Activated T-helper 1 cell treated with anti-CD3 and anti-CD28 coated beads, Interleukin-12 subunit alpha, Interleukin-12 subunit beta, Interleukin-2, Interleukin-4 antibody, amounts not matched to agents 30 ng/mL and 10 ng/mL and 1 ng/mL, durations not matched to agents 14 hours and 24 hours and 36 hours (primary cell): ENCODE measurements at regions of chr12 and their contacts with region 1.

Region 1: GRCh38 chr12:95217377-95218149 is at the starts of genes FGD6 and VEZT:
- DNase-seq: peak; percentile 98
- H3K4me3 Mint-ChIP-seq: peak within 1 kb of the TSS; percentile 97
- H3K27ac Mint-ChIP-seq: peak within 1 kb of the TSS; percentile 98
- H3K4me1 Mint-ChIP-seq: peaks cover 37% of the 10 kb centered on the region
- H3K27me3 Mint-ChIP-seq: peaks cover 9% of the 10 kb centered on the region
- total RNA-seq, gene FGD6: 0.64 and 0.86 TPM in 2 replicates
- total RNA-seq, gene VEZT: 58.1 and 64.7 TPM in 2 replicates

Region 2: GRCh38 chr12:95003213-95003920 is 214.2 kb before region 1 on chr12 and contains the start of gene NDUFA12:
- intact Hi-C with region 1: loop called (anchors 1 kb)
- DNase-seq: peak; percentile 94
- H3K4me3 Mint-ChIP-seq: peak within 1 kb of the TSS; percentile 95
- H3K27ac Mint-ChIP-seq: peak within 1 kb of the TSS; percentile 93
- H3K4me1 Mint-ChIP-seq: peaks cover 30% of the 10 kb centered on the region
- H3K27me3 Mint-ChIP-seq: no peaks in the 10 kb centered on the region
- total RNA-seq, gene NDUFA12: 113 TPM in 2 replicates

Region 3: GRCh38 chr12:95102916-95103671 is 114.5 kb before region 1 on chr12:
- intact Hi-C with region 1: loop called (anchors 1 kb)
- DNase-seq: peak; percentile 39
- H3K4me3 Mint-ChIP-seq: no peak overlapping the region
- H3K27ac Mint-ChIP-seq: peak overlapping the region; percentile 20
- H3K4me1 Mint-ChIP-seq: peaks cover 10% of the 10 kb centered on the region
- H3K27me3 Mint-ChIP-seq: no peaks in the 10 kb centered on the region

Region 4: GRCh38 chr12:95336390-95337067 is 119.0 kb after region 1 on chr12:
- intact Hi-C with region 1: loop called (anchors 1 kb)
- DNase-seq: no peak
- H3K4me3 Mint-ChIP-seq: no peak overlapping the region
- H3K27ac Mint-ChIP-seq: no peak overlapping the region
- H3K4me1 Mint-ChIP-seq: peaks cover 6% of the 10 kb centered on the region
- H3K27me3 Mint-ChIP-seq: peaks cover 2% of the 10 kb centered on the region

Region 5: DNA sequence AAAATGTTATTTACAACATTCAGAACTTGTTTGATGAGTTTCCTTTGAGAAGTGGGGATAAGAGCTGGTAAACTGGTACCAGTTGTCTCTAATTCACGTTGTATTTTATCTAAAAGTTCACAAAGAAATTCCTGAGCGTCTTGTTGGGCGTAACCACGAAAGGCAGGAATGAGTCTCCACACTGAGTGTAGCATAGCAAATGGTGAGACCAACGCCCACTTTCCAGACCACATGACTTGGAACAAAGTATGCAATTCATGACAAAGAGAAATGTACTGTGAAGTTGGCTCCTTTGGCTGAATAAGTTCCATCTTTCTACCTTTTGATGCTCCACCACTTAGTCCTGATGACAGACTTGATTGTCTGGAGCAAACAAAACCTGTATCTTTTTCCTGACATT is 315.3 kb after region 1 on chr12:
- intact Hi-C with region 1: loop called (anchors 1 kb)
- DNase-seq: no peak
- H3K4me3 Mint-ChIP-seq: no peak overlapping the region
- H3K27ac Mint-ChIP-seq: no peak overlapping the region
- H3K4me1 Mint-ChIP-seq: peaks cover 7% of the 10 kb centered on the region
- H3K27me3 Mint-ChIP-seq: no peaks in the 10 kb centered on the region

Region 6: DNA sequence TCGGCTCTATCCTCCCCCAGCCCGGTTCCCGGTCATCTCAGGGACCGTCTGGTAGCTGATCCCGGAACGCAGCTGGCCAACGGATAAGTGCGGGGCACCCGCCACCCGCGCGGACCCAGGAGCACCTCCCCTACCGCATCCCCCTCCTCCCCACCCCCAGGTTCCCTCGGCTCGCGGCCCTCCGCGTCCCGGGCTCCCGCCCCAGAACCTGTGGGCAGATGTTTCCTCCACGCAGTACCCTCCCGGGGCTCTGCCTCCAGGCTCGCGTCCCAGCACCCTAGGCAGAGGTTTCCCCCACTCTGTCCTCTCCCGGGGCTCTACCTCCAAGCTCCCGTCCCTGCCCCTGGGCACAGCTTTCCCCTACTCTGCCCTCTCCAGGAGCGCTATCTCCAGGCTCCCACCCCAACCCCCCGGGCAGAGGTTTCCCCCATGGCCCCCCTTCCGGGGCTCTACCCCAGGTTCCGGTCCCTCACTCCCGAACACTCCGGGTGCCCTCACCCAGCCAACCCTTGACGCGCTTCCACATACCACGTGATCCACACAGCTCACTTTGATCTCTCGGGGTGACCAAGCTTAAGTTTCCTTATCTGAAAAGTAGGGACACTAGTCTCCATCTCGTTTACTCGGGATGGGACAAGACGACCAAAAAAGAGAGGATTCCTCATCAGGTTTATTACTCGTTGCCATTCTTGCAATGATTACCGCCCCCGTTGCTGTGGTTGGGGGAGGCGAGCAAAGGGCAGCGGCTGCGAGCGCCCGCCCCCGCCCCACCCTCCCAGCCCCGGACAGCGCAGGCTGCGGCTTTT is 725.2 kb after region 1 on chr12 and contains the start of gene CCDC38:
- intact Hi-C with region 1: loop called (anchors 2 kb)
- DNase-seq: peak; percentile 78
- H3K4me3 Mint-ChIP-seq: peak within 1 kb of the TSS; percentile 92
- H3K27ac Mint-ChIP-seq: peak within 1 kb of the TSS; percentile 95
- H3K4me1 Mint-ChIP-seq: peaks cover 5% of the 10 kb centered on the region
- H3K27me3 Mint-ChIP-seq: peaks cover 24% of the 10 kb centered on the region
- total RNA-seq, gene CCDC38: not detected in 2 replicates